Panc1 (cell line): ENCODE measurements at regions of chr5 and their contacts with region 1.

Region 1: GRCh38 chr5:10519729-10520128 is 44.1 kb upstream of the ANKRD33B start:
- DNase-seq: no peak
- ATAC-seq: no peak
- H3K4me3 ChIP-seq: no peak overlapping the region
- H3K27ac ChIP-seq: no peak overlapping the region
- H3K4me1 ChIP-seq: 0 out of 2 replicates have a peak, but pooled peaks cover 2% of the 10 kb centered on the region
- H3K27me3 ChIP-seq: no peaks in the 10 kb centered on the region
- CTCF ChIP-seq: no peak

Region 2: DNA sequence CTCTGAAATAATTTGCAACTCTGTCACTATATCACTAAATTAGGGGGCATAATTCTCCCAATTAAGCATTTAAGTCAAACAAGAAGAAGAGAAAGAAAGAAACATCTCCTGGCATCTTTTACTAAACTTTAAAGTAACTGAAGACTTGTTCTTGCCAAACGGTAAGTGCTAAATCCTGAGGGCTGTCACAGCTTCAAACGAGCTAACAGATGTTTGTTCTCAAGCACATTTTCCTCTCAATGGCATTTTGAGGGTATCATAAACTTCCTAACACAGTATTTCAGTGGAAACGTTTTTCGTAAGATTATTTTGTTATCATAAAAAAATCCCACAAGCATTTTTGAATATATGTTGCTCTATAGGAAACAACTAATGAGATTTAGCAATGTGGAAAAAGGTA is 720.1 kb before region 1 on chr5:
- CTCF ChIA-PET with region 1: no interaction called
- POLR2A ChIA-PET with region 1: no interaction called
- in situ Hi-C with region 1: no loop called
- intact Hi-C with region 1: no loop called
- DNase-seq: no peak
- ATAC-seq: no peak
- H3K4me3 ChIP-seq: no peak overlapping the region
- H3K27ac ChIP-seq: no peak overlapping the region
- H3K4me1 ChIP-seq: no peaks in the 10 kb centered on the region
- H3K27me3 ChIP-seq: no peaks in the 10 kb centered on the region
- CTCF ChIP-seq: no peak

Region 3: GRCh38 chr5:10607666-10608073 is 87.9 kb after region 1 on chr5:
- CTCF ChIA-PET with region 1: interaction called, 7 read pairs
- POLR2A ChIA-PET with region 1: interaction called, 13 read pairs
- in situ Hi-C with region 1: no loop called
- intact Hi-C with region 1: no loop called
- DNase-seq: no peak
- ATAC-seq: no peak
- H3K4me3 ChIP-seq: no peak overlapping the region
- H3K27ac ChIP-seq: no peak overlapping the region
- H3K4me1 ChIP-seq: no peaks in the 10 kb centered on the region
- H3K27me3 ChIP-seq: no peaks in the 10 kb centered on the region
- CTCF ChIP-seq: no peak